Activated naive CD8-positive, alpha-beta T cell treated with anti-CD3 and anti-CD28 coated beads, Interleukin-2, amount 10 ng/mL, durations not matched to agents 7 days and 5 days (primary cell): ENCODE measurements at regions of chr6 and their contacts with region 1.

Region 1: GRCh38 chr6:5832668-5833067 is 174.1 kb downstream of the NRN1 start:
- DNase-seq: peak; percentile 42
- ATAC-seq: no peak
- H3K4me3 Mint-ChIP-seq: peak overlapping the region; percentile 71
- H3K27ac Mint-ChIP-seq: peak overlapping the region; percentile 93
- H3K4me1 Mint-ChIP-seq: peaks cover 44% of the 10 kb centered on the region
- H3K27me3 Mint-ChIP-seq: no peaks in the 10 kb centered on the region

Region 2: DNA sequence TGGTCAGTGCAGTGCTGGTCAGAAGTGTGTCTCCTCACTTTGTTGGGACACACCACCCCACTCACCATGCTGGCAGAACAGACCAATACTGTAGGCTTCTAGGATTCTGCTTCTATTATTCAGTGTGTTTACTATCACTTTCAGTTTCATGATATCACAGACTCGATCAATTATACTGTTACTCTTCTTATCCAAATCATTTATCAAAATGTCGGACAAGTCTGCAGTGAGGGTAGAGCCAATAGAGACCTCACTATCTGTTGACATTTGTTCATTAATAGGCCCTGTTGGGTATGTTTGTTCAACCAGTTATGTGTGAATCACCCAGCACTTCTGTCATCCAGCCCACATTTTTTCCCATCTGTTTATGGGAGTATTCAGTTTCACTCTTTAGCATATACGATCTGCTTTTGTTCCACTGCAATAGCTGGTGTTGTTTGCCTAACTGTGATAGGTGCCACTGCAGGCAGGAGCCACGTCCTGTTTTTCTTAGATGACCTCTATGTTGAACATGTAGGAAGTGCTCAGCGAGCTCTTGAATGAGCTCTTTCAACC is 34.0 kb after region 1 on chr6:
- POLR2A ChIA-PET with region 1: interaction called, 10 read pairs
- DNase-seq: no peak
- ATAC-seq: peak; percentile 70
- H3K4me3 Mint-ChIP-seq: peak overlapping the region; percentile 78
- H3K27ac Mint-ChIP-seq: peak overlapping the region; percentile 93
- H3K4me1 Mint-ChIP-seq: peaks cover 37% of the 10 kb centered on the region
- H3K27me3 Mint-ChIP-seq: no peaks in the 10 kb centered on the region

Region 3: DNA sequence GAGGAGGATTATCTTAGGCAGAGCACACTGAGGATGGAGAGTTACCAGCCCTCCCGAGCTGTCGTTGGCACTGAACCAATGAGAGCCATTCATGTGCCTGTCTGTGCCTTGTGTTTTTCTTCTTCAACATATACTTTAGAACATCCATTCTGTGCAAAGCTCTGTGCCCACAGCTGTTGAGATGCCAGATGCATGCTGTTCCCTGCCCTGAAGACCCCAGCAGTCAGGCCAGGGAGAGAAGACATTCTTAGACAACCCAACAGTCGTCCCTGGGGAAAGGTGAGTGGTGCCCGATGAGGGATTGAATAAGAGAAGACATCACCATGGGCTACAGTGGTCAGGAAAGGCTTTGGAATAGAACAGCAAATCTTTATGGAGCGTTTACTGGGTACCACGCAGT is 60.0 kb after region 1 on chr6:
- POLR2A ChIA-PET with region 1: interaction called, 11 read pairs
- DNase-seq: no peak
- ATAC-seq: no peak
- H3K4me3 Mint-ChIP-seq: peak overlapping the region; percentile 89
- H3K27ac Mint-ChIP-seq: peak overlapping the region; percentile 95
- H3K4me1 Mint-ChIP-seq: peaks cover 5% of the 10 kb centered on the region
- H3K27me3 Mint-ChIP-seq: peaks cover 4% of the 10 kb centered on the region